Right lobe of liver (tissue), 6 donors: ENCODE measurements at regions of chr5 and their contacts with region 1.

Region 1: DNA sequence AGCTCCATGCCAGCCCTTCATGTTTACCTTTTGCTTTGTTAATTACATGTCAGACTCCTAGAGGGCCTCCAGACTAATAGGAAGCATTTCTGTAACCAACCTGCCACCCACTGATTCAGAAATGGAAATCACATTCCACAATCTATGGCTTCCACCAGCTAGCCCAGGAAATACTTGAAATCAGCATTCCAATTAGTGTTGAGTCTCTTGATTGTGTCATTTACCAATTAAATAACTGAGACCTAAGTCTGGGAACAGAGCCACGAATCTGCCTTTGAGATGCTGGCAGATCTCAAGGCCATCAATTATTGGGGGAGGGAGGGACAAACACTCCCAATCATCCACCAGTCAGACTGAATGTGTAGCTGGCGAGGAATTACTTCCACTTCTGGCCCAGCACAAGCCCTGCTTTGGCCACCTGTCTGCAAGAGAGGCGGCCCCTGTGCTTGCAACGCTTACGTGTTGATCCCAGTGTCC is 27.4 kb upstream of the SAP30L start:
- DNase-seq: no peak
- ATAC-seq: no peak
- H3K4me3 ChIP-seq: no peak overlapping the region
- H3K27ac ChIP-seq: no peak overlapping the region
- H3K4me1 ChIP-seq: no peaks in the 10 kb centered on the region
- H3K27me3 ChIP-seq: no peaks in the 10 kb centered on the region
- CTCF ChIP-seq: no peak
- POLR2A ChIP-seq: no peak

Region 2: DNA sequence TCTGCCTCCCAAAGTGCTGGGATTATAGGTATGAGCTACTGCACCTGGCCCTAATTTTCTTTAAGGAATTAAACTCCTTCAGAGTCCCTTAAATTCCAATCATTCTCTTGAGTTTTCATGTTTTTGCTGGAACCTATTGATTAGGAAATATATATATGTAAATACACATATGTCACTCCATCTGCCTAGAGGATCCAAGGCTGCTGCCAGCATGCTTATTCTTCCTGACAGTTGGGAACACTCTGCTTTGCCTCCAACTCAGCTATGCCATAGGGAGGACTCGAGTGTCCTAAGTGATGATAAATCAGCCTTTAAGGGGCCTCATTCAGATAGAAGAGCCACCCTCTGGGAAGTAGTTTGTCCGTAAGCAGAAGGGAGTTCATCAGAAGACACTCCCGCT is 357.8 kb before region 1 on chr5:
- intact Hi-C with region 1: loop called in 1 of 2 experiments (anchors 10 kb)
- DNase-seq: no peak
- ATAC-seq: no peak
- H3K4me3 ChIP-seq: no peak overlapping the region
- H3K27ac ChIP-seq: no peak overlapping the region
- H3K4me1 ChIP-seq: peaks cover 0 to 11% (median 5%) of the 10 kb centered on the region in 4 donors
- H3K27me3 ChIP-seq: no peaks in the 10 kb centered on the region
- CTCF ChIP-seq: no peak
- POLR2A ChIP-seq: no peak

Region 3: DNA sequence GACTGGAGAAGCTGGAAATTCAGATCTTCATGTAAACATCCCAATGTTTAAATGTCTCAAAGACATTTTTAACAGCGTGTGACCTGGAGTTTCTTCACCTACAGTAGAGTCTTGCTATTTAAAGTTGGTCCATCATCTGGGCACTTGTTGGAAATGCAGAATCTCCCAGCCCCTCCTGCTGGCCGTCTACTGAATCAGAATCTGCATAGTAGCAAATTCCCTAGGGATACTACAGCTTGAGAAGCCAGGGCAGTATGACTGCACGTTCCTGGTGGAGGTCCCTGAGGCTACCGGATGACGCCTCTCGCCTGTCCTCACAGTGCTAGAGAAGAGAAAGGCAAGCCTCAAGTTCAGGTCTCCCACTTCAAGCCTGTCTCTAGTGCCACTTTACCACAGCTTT is 43.1 kb after region 1 on chr5:
- intact Hi-C with region 1: no loop called
- DNase-seq: no peak
- ATAC-seq: peak in 1 of 4 donors; percentile 17
- H3K4me3 ChIP-seq: no peak overlapping the region
- H3K27ac ChIP-seq: no peak overlapping the region
- H3K4me1 ChIP-seq: peaks cover 0 to 5% (median 0%) of the 10 kb centered on the region in 4 donors
- H3K27me3 ChIP-seq: no peaks in the 10 kb centered on the region
- CTCF ChIP-seq: no peak
- POLR2A ChIP-seq: no peak